Right ventricle myocardium superior (tissue), 1 donor: ENCODE measurements at regions of chr13 and their contacts with region 1.

Region 1: DNA sequence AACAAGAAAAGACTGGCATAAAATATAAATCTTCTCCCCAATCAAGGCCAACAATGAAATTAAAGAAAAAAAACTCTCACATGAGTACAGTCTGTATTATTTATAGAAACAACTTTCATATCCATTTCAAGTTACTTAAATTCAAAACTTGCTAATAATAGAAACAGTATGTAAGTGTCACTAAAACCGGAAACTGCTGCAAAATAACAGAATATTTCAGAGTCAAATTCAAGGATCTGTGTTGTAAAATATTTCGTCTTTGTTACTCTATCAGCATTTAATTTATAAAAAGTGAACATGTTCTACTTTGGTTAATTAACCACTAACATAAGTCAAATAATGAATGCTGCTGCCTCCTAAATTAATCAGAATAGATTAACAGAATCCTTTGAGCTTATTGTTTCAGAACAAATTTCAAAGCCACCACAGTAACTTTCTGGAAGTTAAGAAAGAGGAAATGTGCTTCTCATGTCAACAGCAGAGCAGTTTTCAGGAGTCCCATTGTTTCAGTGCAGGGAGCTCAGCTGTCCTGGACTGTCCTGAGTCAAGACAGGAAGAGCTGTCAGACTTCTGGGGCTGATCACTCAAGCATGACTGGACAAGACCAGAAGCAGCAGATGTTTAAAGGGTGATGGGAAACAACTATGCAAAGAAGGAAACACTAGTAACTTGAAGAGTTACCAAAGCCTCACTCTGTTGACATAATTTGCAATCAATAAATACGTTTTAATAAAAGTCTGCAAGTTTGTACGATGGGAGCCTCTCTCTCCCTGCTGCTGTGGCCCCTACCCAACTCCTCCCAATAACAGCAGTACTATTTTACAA is 76.9 kb downstream of the FOXO1 start:
- DNase-seq: peak; percentile 47
- ATAC-seq: peak; percentile 75

Region 2: GRCh38 chr13:40470660-40471059 is 118.8 kb before region 1 on chr13:
- intact Hi-C with region 1: no loop called
- DNase-seq: no peak
- ATAC-seq: peak; percentile 86

Region 3: GRCh38 chr13:40503966-40504591 is 85.4 kb before region 1 on chr13:
- intact Hi-C with region 1: no loop called
- DNase-seq: no peak
- ATAC-seq: no peak

Region 4: GRCh38 chr13:40644838-40645604 is 55.5 kb after region 1 on chr13:
- intact Hi-C with region 1: loop called (anchors 10 kb)
- DNase-seq: no peak
- ATAC-seq: peak; percentile 23

Region 5: GRCh38 chr13:40666045-40666904 is 76.8 kb after region 1 on chr13 and contains the start of gene FOXO1:
- intact Hi-C with region 1: loop called (anchors 10 kb)
- DNase-seq: peak; percentile 94
- ATAC-seq: peak; percentile 87
- total RNA-seq, gene FOXO1: 14.4 TPM